Endothelial cell of umbilical vein (primary cell): ENCODE measurements at regions of chr1 and their contacts with region 1.

Region 1: GRCh38 chr1:40050863-40051262 is 10.3 kb downstream of the CAP1 start:
- DNase-seq: no peak
- H3K4me3 ChIP-seq: no peak overlapping the region
- H3K27ac ChIP-seq: no peak overlapping the region
- H3K4me1 ChIP-seq: peaks cover under 1% of the 10 kb centered on the region
- H3K27me3 ChIP-seq: no peaks in the 10 kb centered on the region
- CTCF ChIP-seq: no peak
- POLR2A ChIP-seq: no peak

Region 2: GRCh38 chr1:40096977-40097782 is 46.3 kb after region 1 on chr1 and contains the start of gene PPT1:
- CTCF ChIA-PET with region 1: no interaction called
- POLR2A ChIA-PET with region 1: interaction called, 12 read pairs
- dilution Hi-C with region 1: no loop called
- intact Hi-C with region 1: no loop called
- DNase-seq: peak; percentile 75
- H3K4me3 ChIP-seq: peak within 1 kb of the TSS; percentile 55 to 75 (median 68)
- H3K27ac ChIP-seq: no peak within 1 kb of the TSS
- H3K4me1 ChIP-seq: peaks cover 14% of the 10 kb centered on the region
- H3K27me3 ChIP-seq: peaks cover 2 to 7% of the 10 kb centered on the region in 2 experiments
- CTCF ChIP-seq: peak in 1 of 2 donors; percentile 21
- POLR2A ChIP-seq: peak; percentile 85
- total RNA-seq, gene PPT1: 121 and 131 TPM in 2 replicates